Activated CD4-positive, alpha-beta memory T cell treated with anti-CD3 and anti-CD28 coated beads, Interleukin-2, amount 10 ng/mL, durations not matched to agents 7 days and 5 days (primary cell): ENCODE measurements at regions of chr10 and their contacts with region 1.

Region 1: DNA sequence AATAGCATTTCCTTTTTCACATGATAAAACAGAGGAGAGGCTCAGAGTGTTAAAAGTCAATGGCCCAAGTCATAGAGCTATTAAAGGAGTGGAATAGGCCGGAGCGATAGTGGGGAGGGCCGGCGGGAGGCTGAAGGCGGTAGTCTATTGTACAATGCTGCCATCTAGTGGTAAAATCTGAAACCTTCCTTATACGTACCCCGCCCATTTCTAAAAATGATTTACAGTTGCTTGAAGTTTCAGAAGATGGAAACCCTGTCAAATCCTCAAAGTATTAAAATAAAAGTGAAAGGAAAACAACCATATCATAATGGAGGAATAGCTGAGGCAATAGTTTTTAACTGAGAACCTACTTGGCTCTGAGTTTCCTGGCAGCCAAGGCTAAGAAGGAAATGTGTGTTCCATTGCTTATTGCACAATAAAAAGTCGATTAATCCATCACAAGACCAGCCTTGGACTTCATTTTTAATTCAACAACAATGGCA is 209.1 kb downstream of the CCSER2 start:
- DNase-seq: peak; percentile 37
- H3K4me3 Mint-ChIP-seq: no peak overlapping the region
- H3K27ac Mint-ChIP-seq: no peak overlapping the region
- H3K4me1 Mint-ChIP-seq: peaks cover 18% of the 10 kb centered on the region
- H3K27me3 Mint-ChIP-seq: peaks cover 15% of the 10 kb centered on the region

Region 2: DNA sequence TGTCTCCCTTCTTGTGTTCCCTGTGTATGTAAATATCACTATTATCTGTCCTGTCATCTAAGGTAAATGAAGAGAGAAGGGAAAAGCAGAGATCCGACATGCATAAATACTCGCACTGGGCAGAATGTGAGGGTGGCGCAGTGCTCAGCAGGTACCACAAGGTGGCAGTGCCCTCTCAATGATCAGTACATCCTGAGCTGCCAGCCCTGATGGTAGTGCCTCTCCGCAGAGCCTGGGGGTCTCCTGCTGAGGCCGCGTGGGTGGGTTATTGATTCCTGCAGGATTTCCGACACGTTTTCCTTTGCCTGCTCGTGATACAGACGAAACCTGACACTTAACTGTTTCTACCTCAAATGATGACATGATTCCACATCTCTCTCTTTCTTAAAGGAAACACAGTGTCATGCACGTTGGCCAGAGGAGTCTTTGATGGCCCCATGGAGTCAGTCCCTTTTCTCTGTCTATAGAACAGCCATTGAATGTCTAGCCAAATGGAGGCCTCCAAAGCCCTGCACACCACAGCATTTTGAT is 272.8 kb before region 1 on chr10:
- CTCF ChIA-PET with region 1: interaction called, 239 read pairs
- POLR2A ChIA-PET with region 1: interaction called, 10 read pairs
- DNase-seq: peak; percentile 75
- H3K4me3 Mint-ChIP-seq: no peak overlapping the region
- H3K27ac Mint-ChIP-seq: no peak overlapping the region
- H3K4me1 Mint-ChIP-seq: peaks cover 13% of the 10 kb centered on the region
- H3K27me3 Mint-ChIP-seq: peaks cover 26% of the 10 kb centered on the region

Region 3: DNA sequence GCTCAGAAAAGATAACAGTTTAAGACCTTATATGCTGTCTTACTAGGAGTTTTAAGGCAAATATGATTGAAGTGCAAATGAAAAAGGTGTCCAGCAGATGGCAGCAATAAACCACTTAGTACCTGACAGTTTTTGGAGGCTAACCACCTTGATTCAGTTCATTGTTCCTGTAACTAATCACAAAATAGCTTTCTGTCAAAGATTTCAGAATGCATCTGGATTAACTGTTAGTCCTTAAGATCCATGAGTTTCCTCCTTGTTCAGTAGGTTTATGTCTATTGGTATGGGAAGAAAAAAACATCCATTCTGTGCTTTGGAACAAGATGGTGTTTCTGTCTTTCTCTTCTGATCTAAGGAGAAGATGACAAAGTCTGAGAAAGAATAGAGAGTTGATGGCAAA is 162.5 kb before region 1 on chr10:
- CTCF ChIA-PET with region 1: interaction called, 32 read pairs
- POLR2A ChIA-PET with region 1: no interaction called
- DNase-seq: peak; percentile 30
- H3K4me3 Mint-ChIP-seq: no peak overlapping the region
- H3K27ac Mint-ChIP-seq: no peak overlapping the region
- H3K4me1 Mint-ChIP-seq: peaks cover 25% of the 10 kb centered on the region
- H3K27me3 Mint-ChIP-seq: no peaks in the 10 kb centered on the region

Region 4: DNA sequence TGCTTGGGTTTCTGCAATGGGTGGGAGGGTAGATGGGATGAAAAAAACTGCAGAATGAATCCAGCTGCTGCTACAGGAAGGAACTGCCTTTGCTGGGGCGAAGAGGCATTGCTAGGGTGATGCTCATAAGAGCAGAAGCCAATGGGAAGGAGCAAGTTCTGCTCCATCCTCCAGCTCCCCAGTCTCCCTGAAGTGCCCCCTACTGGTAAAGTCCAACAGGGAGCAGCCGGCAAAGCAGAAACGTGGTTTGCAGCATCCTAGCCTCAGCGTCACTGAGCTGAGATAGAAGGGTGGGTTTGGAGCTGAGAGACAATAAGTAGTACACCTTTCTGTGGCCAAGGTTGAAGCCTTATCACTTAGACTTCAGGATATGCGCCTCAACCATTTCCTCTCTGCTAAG is 11.4 kb after region 1 on chr10:
- CTCF ChIA-PET with region 1: interaction called, 21 read pairs
- POLR2A ChIA-PET with region 1: no interaction called
- DNase-seq: no peak
- H3K4me3 Mint-ChIP-seq: no peak overlapping the region
- H3K27ac Mint-ChIP-seq: no peak overlapping the region
- H3K4me1 Mint-ChIP-seq: no peaks in the 10 kb centered on the region
- H3K27me3 Mint-ChIP-seq: peaks cover 15% of the 10 kb centered on the region